ENCODE measurements at regions of chr4 and their contacts with region 1.

Region 1: GRCh38 chr4:52861879-52862616 is at the start of gene RASL11B:
- DNase-seq: peak; percentile 90
- ATAC-seq: peak; percentile 99
- total RNA-seq, gene RASL11B: 3.7 TPM

Region 2: GRCh38 chr4:52606726-52607125 is 255.3 kb before region 1 on chr4:
- intact Hi-C with region 1: loop called (anchors 10 kb)
- DNase-seq: no peak
- ATAC-seq: no peak

Region 3: DNA sequence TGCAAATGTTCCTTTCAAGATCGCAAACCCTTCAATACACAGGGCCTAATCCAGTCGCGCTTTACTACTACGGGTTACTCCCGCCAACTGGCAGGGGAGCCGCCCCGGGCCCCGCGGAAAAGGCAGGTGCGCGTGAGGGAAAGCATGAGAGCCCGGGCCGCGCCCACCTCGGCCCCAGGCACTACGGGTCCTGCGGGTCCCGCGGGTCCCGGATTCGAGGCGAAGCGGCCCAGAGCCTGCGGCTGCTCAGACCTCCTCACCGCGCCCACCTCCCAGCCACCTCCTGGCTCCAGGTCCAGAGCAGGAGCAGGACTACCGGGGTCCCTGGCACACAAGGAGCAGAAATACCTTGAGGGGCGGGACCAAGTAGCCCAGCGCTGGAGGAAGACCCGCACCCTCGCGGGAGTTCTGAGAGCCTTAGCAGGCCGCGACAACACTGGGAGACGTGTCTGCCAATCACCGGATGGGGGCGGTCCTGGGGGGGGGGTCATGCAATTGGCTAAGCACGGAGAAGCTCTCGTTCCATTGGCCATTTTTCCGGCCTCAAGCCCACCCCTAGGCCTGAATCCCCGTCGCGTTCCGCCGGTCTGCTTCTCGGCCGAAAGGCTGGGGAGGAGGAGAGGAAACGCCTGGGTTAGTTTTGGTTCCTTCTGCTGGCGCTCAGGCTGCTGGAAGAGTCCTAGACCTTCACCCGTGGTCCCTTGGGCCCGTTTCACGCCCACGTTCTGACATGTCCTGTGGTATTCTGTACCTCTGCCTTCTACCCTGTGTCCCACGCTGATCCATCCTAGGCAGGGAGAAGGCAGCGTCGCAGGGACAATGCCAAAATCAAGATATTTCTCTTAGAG is 139.9 kb before region 1 on chr4:
- intact Hi-C with region 1: loop called (anchors 2 kb)
- DNase-seq: peak; percentile 95
- ATAC-seq: peak; percentile 99

Region 4: GRCh38 chr4:52824603-52825459 is 37.2 kb before region 1 on chr4:
- intact Hi-C with region 1: loop called (anchors 5 kb)
- DNase-seq: no peak
- ATAC-seq: peak; percentile 95

Region 5: GRCh38 chr4:53532521-53532920 is 670.5 kb after region 1 on chr4:
- intact Hi-C with region 1: no loop called
- DNase-seq: no peak
- ATAC-seq: no peak